Gastrocnemius medialis (tissue), 4 donors: ENCODE measurements at regions of chr11 and their contacts with region 1.

Region 1: DNA sequence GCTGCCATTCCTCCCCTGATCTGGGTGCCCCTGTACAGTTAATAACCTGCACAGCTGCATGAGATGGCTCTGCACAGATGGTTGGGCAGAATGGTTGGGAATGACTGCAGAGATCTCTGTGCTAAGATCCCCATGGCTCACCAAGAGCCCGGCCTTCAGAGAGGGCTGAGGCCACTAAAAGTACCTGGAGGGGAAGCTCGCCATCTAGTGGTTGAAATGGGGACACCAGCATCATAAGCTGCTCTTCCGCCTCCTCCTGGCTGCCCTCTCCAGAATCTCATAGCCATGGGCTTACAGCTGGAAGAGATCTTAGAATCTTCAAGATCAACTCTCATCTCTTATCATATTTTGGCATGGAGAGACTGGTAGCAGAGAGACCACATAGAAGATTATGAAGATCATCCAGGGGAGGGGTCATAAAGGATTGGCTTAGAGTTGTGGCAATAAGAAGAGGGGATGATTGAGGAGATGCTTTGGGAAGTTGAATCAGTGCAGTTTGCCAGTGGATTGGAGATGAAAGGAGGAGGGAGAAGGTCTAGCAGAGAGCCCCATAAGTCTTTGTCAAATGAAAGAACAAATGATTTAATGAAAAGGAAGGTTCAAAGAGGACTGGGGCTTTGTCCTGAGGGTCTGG is 22.0 kb upstream of the TLCD5 start:
- DNase-seq: peak; percentile 15 to 45
- ATAC-seq: peak; percentile 71 to 92
- H3K4me3 ChIP-seq: no peak overlapping the region
- H3K27ac ChIP-seq: no peak overlapping the region
- H3K4me1 ChIP-seq: no peaks in the 10 kb centered on the region
- H3K27me3 ChIP-seq: no peaks in the 10 kb centered on the region
- CTCF ChIP-seq: peak; percentile 72 to 86 (median 74)
- POLR2A ChIP-seq: no peak

Region 2: DNA sequence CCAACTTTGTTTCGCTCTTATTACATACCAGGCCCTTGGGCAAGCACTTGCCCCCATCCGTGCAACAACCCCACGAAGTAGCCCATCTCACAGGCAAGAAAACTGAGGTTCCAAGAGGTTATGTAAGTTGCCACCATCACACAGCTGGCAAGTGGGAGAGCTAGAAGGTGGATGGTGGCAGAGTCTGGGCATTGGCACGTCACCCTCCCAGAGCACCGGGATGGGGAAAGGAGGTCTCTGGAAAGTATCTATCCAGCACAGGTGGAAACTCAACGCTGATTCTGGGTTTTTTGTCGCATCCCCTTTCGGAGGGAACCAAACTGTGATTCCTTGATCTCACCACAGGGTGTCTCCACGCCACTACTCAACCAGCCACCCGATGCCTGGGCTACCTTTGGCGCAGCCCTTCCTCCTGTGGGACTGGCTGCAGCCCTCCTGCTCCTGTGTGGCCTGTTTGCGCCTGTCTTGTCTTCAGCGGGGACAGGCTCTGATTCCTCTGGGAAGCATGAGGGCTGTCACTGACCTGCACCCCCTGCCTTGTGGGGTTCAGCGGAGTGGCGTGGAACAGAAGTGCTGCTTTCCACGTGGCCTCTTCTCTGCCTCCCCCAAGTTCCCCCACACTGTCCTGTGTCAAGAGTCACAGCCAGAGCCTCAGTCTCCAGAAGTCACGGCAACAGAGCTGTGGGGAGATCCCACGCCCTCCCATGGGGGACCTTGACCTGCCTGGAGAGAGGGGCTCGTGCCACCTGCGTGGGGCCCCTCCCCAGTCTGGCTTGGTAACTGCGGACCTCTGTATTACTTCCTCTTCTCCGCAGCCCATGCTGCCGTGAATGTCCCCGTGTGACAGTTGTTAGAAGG is 130.8 kb before region 1 on chr11:
- in situ Hi-C with region 1: loop called (anchors 5 to 10 kb)
- intact Hi-C with region 1: loop called (anchors 1 kb)
- DNase-seq: peak; percentile 38 to 46
- ATAC-seq: peak; percentile 28 to 70
- H3K4me3 ChIP-seq: no peak overlapping the region
- H3K27ac ChIP-seq: no peak overlapping the region
- H3K4me1 ChIP-seq: peaks cover 0 to 4% of the 10 kb centered on the region in 2 donors
- H3K27me3 ChIP-seq: peaks cover 25 to 28% (median 27%) of the 10 kb centered on the region in 3 donors
- CTCF ChIP-seq: peak; percentile 66 to 80 (median 77)
- POLR2A ChIP-seq: no peak

Region 3: GRCh38 chr11:120178561-120179056 is 124.5 kb before region 1 on chr11:
- in situ Hi-C with region 1: loop called (anchors 5 to 10 kb)
- intact Hi-C with region 1: no loop called
- DNase-seq: no peak
- ATAC-seq: no peak
- H3K4me3 ChIP-seq: no peak overlapping the region
- H3K27ac ChIP-seq: peak overlapping the region in 2 of 4 donors; percentile 20 to 22
- H3K4me1 ChIP-seq: peaks cover 7 to 10% of the 10 kb centered on the region in 2 donors
- H3K27me3 ChIP-seq: no peaks in the 10 kb centered on the region
- CTCF ChIP-seq: no peak
- POLR2A ChIP-seq: no peak

Region 4: DNA sequence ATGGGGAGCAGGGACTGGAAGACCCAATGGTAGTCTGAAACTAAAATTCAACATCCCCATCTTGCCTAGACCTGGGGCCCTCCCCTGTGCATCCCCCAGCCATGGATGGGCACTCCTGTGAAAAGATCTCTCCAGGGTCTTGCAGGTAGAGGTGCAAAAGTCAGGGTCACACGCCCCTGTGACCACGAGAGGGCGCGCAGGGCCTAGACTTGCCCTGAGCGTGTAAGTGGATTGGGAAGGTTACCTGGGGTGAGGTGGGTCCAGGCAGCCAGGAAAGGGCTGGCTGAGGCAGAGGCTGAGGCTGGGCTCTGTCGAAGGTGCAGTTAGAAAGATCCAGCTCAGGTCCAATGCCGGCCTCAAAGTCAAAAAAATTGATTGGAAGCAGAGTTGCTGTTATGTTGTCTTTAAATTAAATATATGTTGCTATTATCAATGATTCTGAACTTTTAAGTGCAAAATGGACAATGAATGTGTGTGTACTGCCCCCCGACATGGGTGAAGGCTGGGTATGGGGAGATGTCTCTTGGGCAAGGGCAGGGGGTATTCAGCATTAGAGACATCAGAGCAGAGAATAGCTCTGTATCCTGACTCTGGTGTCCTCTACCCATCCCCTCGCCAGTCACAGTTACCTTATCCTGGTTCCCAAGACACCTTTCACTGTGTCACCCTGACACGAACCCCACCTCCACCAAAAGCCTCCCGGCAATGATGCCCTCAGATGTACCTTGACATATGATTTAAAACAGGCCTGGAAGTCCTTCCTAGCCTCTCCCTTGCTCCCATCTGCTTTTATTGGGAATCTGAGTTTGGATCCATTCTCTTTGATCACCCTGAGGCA is 67.9 kb before region 1 on chr11:
- in situ Hi-C with region 1: loop called in 1 of 4 experiments (anchors 10 kb)
- intact Hi-C with region 1: loop called (anchors 1 kb)
- DNase-seq: no peak
- ATAC-seq: peak in 1 of 2 donors; percentile 64
- H3K4me3 ChIP-seq: no peak overlapping the region
- H3K27ac ChIP-seq: no peak overlapping the region
- H3K4me1 ChIP-seq: peaks cover 0 to 3% of the 10 kb centered on the region in 2 donors
- H3K27me3 ChIP-seq: peaks cover 10 to 13% (median 10%) of the 10 kb centered on the region in 3 donors
- CTCF ChIP-seq: peak; percentile 37 to 63 (median 60)
- POLR2A ChIP-seq: no peak

Region 5: DNA sequence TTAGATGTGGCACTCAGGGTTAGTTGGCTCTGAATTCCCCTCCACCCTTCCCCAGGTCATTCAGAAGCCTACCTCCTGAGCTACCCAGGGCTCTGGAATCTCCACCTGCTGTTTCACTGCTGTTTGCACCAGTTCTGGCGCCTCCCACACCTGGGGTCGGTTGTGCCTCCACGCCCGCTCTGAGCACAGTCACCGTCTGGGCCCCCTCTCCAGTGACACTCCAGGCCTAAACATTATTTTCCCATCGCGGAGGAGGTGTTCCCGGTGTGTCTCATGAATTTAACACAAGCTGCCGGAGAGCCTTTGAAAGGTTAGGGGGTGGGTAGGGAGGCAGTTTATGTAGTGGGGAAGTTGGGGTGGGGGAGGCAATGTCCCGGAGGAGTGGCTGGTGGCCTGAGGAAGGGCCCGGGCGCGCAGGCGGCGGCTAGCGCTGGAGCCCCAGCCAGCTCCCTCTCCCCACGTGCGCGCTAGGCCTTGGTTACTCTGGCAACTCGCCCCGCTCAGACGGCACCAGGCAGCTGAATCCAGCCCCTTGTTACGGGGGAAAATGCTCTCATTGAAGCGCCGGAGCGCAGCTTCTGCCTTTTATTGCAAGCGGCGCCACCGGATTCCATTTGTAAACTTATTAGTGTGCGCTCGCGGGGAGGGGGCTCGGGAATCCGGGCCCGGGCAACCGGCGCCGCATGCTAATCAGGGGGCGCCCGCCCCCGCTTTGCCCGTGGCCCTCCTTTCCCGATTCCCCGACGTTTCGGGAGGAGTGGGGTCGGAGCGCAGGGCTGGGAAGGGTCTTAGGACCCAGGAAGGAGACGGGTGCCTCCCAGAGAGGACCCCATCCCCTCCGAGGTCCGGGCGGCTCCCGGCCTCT is 260.8 kb after region 1 on chr11:
- in situ Hi-C with region 1: no loop called
- intact Hi-C with region 1: no loop called
- DNase-seq: no peak
- ATAC-seq: no peak
- H3K4me3 ChIP-seq: peak overlapping the region; percentile 42 to 51 (median 46)
- H3K27ac ChIP-seq: no peak overlapping the region
- H3K4me1 ChIP-seq: peaks cover 5 to 8% of the 10 kb centered on the region in 2 donors
- H3K27me3 ChIP-seq: peaks cover 9 to 27% (median 18%) of the 10 kb centered on the region in 3 donors
- CTCF ChIP-seq: no peak
- POLR2A ChIP-seq: no peak

Region 6: DNA sequence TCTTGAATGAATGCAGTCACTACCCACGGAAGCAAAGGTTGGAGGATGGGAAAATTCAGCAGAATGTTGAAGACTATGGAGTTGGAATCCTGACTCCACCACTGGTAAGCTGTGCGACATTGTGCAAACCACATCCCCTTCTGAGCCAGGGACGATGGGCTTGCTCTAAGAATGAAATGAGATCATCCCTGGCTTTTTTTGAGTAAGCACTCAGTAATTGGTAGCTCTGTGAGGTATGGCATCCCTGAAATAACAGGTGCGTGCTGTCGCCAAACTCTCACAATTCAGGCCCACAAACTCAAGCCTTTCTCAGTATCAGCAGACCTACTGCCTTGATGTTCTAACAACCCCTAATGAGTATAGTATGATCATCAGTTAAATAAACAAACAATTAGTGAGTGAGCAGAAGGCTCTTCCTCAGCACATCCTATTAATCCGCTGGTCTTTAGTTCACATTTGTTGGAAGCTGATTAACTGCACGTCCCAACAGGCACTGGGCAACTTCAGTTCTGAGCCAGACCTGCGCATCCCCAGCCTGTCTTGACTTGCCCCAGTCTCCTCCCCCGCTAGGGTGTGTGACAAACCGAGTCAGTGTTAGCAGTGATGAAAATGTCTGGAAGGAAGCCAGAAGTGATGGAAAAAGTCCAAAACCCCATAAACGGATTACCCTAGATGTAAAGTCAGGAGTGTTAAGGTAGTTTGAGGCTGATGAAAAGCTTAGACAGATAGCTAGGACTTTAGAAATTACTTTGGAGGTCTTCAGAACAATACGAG is 443.9 kb after region 1 on chr11:
- in situ Hi-C with region 1: no loop called
- intact Hi-C with region 1: no loop called
- DNase-seq: no peak
- ATAC-seq: no peak
- H3K4me3 ChIP-seq: no peak overlapping the region
- H3K27ac ChIP-seq: no peak overlapping the region
- H3K4me1 ChIP-seq: no peaks in the 10 kb centered on the region
- H3K27me3 ChIP-seq: peaks cover 0 to 7% (median 0%) of the 10 kb centered on the region in 3 donors
- CTCF ChIP-seq: no peak
- POLR2A ChIP-seq: no peak